K562 (cell line): ENCODE measurements at regions of chr10 and their contacts with region 1.

Region 1: DNA sequence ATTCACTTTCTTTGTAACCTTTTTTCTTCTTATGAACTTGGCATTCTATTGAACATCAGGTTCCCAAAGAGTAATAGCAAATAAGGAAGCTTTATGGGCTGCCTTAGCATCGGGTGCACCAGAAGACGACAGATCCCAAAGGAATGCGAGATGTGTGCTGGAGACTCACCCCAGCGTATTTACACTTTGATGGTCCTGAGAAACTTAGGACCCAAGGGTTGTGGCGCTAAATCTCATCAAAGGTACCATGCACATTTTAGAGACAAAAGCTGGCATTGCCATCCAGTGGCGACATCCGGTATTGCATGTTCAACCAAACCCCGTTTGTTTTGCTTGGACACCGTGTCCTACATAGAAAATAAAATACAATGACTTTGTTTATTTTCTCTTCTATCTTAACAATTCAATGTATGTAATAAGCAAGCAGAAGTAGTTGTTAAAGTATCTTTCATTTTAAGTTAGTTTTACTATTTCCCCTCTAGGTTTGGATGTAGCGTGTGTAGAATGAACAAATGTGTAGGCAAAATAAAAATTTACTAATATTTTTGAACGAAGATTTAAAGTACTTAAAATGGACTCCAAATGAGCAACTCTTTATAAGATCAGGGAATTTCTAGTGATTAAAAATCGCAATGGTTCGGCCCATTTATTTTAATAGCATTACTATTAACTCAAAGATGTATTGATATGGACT is 1154.8 kb downstream of the GATA3 start:
- DNase-seq: peak; percentile 39 to 67 (median 46)
- ATAC-seq: peak; percentile 76
- H3K4me3 ChIP-seq: no peak overlapping the region
- H3K27ac ChIP-seq: no peak overlapping the region
- H3K4me1 ChIP-seq: no peaks in the 10 kb centered on the region
- H3K27me3 ChIP-seq: no peaks in the 10 kb centered on the region
- CTCF ChIP-seq: peak; percentile 62 to 78 (median 76)
- EP300 ChIP-seq: no peak
- POLR2A ChIP-seq: no peak
- RAD21 ChIP-seq: peak; percentile 64 to 79

Region 2: GRCh38 chr10:8053446-8054290 is 1155.6 kb before region 1 on chr10:
- CTCF ChIA-PET with region 1: no interaction called
- POLR2A ChIA-PET with region 1: no interaction called
- in situ Hi-C with region 1: no loop called
- intact Hi-C with region 1: loop called (anchors 5 kb)
- DNase-seq: peak; percentile 80 to 96 (median 96)
- ATAC-seq: peak; percentile 99
- H3K4me3 ChIP-seq: peak overlapping the region; percentile 24
- H3K27ac ChIP-seq: no peak overlapping the region
- H3K4me1 ChIP-seq: peaks cover 0 to 26% of the 10 kb centered on the region in 2 experiments; a peak in 3 of 5 replicates
- H3K27me3 ChIP-seq: peaks cover 9 to 43% of the 10 kb centered on the region in 2 experiments; a peak in 4 of 5 replicates
- CTCF ChIP-seq: peak; percentile 63 to 78 (median 66); a peak in 5 of 6 replicates
- EP300 ChIP-seq: no peak
- POLR2A ChIP-seq: no peak
- RAD21 ChIP-seq: peak in 1 of 2 experiments; percentile 48